ENCODE measurements at regions of chr22 and their contacts with region 1.

Region 1: DNA sequence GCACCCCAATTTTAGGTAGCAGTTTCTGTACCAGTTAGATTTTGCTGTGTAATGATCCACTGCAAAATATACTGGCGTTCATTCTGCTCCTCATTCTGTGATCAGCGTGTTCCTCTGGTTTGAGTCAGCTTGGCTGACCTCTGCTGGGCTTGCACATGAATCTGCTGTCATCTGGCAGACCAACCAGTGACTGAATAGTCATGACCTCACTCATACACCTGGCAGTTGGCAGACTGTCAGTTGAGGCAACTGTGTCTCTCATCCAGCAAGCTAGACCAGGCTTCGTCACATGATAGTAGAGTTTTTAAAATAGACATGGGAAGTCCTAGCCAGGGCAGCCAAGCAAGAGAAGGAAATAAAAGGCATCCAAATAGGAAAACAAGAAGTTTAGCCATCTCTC is 316.3 kb upstream of the LARGE1 start:
- DNase-seq: no peak
- ATAC-seq: peak; percentile 96

Region 2: GRCh38 chr22:34294991-34295390 is 58.5 kb after region 1 on chr22:
- intact Hi-C with region 1: loop called (anchors 5 kb)
- DNase-seq: no peak
- ATAC-seq: no peak

Measured in Right ventricle myocardium inferior (tissue), 1 donor.